Vagina (tissue), 2 donors: ENCODE measurements at regions of chr16 and their contacts with region 1.

Region 1: DNA sequence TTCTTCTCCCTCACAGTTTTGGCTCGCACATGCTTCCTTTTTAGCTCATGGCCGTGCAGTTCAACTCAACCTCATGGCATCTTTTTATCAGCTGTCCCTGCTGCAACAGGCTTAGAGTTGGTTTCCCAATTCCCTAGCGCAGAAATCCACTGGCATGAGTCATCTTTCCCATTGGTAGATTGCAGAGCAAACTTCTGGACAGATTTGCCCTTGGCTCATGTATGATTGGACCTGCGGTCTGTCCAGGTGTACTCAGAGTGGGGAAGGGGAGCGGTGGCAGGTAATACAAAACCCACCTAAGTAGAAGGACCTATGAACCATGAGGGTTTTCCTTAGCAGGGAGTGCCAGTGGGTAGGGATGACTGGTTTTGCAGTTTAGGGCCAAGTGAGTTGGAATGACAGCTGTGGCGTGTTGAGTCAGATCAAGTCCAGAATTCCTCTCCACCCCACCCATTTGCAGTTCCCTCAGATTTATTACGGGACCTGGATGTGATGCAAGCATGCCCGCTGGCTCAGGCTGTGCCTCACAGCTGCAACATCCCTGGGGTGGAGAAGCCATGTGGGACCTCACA is 584.7 kb downstream of the WWOX start:
- DNase-seq: peak in 1 of 2 donors; percentile 98
- H3K4me3 ChIP-seq: no peak overlapping the region
- H3K27ac ChIP-seq: peak overlapping the region; percentile 57
- H3K4me1 ChIP-seq: peaks cover 37% of the 10 kb centered on the region
- H3K27me3 ChIP-seq: no peaks in the 10 kb centered on the region
- CTCF ChIP-seq: no peak
- POLR2A ChIP-seq: no peak

Region 2: GRCh38 chr16:78816499-78817195 is 132.5 kb after region 1 on chr16:
- intact Hi-C with region 1: loop called (anchors 10 kb)
- DNase-seq: no peak
- H3K4me3 ChIP-seq: no peak overlapping the region
- H3K27ac ChIP-seq: no peak overlapping the region
- H3K4me1 ChIP-seq: peaks cover 33% of the 10 kb centered on the region
- H3K27me3 ChIP-seq: no peaks in the 10 kb centered on the region
- CTCF ChIP-seq: no peak
- POLR2A ChIP-seq: no peak